ENCODE measurements at regions of chr1 and their contacts with region 1.

Region 1: GRCh38 chr1:169711469-169712281 is at the start of gene SELL:
- DNase-seq: peak; percentile 89
- ATAC-seq: peak; percentile 80
- H3K4me3 Mint-ChIP-seq: peak within 1 kb of the TSS; percentile 81
- H3K27ac Mint-ChIP-seq: peak within 1 kb of the TSS; percentile 90
- H3K4me1 Mint-ChIP-seq: peaks cover 29% of the 10 kb centered on the region
- H3K27me3 Mint-ChIP-seq: peaks cover 10% of the 10 kb centered on the region
- total RNA-seq, gene SELL: 192 to 222 TPM

Region 2: GRCh38 chr1:169546087-169546995 is 165.3 kb before region 1 on chr1:
- CTCF ChIA-PET with region 1: interaction called, 39 read pairs
- POLR2A ChIA-PET with region 1: no interaction called
- DNase-seq: peak; percentile 77
- ATAC-seq: peak; percentile 93
- H3K4me3 Mint-ChIP-seq: no peak overlapping the region
- H3K27ac Mint-ChIP-seq: no peak overlapping the region
- H3K4me1 Mint-ChIP-seq: no peaks in the 10 kb centered on the region
- H3K27me3 Mint-ChIP-seq: no peaks in the 10 kb centered on the region

Region 3: GRCh38 chr1:169576241-169576934 is 135.3 kb before region 1 on chr1:
- CTCF ChIA-PET with region 1: interaction called, 22 read pairs
- POLR2A ChIA-PET with region 1: no interaction called
- DNase-seq: no peak
- ATAC-seq: no peak
- H3K4me3 Mint-ChIP-seq: no peak overlapping the region
- H3K27ac Mint-ChIP-seq: no peak overlapping the region
- H3K4me1 Mint-ChIP-seq: peaks cover 4% of the 10 kb centered on the region
- H3K27me3 Mint-ChIP-seq: no peaks in the 10 kb centered on the region

Region 4: DNA sequence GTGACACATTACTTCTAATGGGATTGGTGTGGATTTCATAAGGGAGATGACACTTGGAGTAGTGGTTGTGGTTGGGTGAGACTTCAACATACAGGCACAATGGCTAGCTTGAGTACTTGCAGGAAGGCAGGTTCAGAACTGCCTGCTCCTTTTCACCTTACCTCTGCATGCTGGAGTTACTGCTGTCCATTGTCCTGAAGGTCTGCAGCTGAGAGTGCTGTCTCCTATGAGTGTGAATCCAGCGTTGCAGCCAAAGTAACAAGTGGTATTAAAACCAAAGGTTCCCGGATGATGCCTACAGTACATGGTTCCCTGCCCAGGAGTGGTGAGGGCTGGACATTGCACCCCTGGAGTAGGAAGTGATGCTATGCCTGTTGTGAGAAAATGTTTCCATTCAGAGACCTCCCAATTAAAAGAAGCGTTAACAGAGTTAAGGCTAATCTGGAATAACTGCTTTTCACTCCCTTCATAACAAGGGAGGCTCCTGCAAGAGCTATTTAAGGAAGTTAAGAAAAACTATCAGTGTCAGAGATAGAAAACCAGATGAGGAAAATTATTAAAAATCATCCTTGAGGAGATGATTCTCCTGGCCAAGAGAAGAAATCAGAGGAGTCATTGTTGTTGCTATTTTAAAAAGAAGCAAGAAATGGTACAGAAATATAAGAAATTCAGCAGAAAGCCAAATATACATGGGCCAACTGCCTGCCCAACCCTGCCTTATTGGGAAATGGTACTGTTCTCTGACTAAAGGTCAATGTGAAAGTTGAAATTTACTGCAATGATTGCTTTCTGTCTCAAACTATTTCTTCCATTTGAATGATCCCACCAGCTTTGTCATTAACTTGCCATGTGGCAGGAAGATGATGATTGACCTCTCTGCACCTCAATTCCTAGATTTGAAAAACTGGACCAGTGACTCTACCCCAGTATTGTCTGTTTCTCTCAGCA is 115.6 kb before region 1 on chr1:
- CTCF ChIA-PET with region 1: interaction called, 215 read pairs
- POLR2A ChIA-PET with region 1: interaction called, 8 read pairs
- DNase-seq: peak; percentile 61
- ATAC-seq: peak; percentile 81
- H3K4me3 Mint-ChIP-seq: no peak overlapping the region
- H3K27ac Mint-ChIP-seq: no peak overlapping the region
- H3K4me1 Mint-ChIP-seq: peaks cover 20% of the 10 kb centered on the region
- H3K27me3 Mint-ChIP-seq: no peaks in the 10 kb centered on the region

Region 5: DNA sequence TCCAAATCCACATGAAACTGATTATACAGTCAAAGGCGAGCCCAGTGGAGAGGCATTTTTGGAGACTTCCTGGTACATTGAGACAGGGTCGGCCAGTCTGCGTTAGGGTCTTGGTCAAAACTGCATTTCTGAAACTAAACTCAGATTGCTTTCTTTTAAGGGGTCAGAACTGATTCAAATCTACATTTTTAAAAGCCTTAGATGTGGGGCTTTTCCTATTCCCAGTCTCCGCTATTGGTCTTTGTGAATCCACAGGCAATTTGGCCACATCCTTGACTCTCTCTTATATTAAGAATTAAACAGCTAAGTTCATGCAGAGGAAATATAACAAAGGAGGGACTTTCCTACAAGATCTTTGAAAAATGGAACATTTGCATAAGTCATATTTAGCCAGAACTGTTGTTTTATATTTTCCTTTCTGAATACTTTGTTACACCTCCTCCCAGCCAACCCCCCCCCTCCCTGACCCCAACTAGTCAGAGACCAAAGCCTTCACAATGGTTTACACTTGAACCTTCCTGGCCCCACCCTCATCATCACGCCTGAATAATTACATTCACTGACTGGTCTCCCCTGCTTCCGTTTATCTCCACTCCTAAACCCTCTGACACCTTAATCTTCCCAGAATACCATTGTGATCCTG is 31.2 kb before region 1 on chr1:
- CTCF ChIA-PET with region 1: interaction called, 12 read pairs
- POLR2A ChIA-PET with region 1: interaction called, 4 read pairs
- DNase-seq: no peak
- ATAC-seq: peak; percentile 45
- H3K4me3 Mint-ChIP-seq: no peak overlapping the region
- H3K27ac Mint-ChIP-seq: peak overlapping the region; percentile 41
- H3K4me1 Mint-ChIP-seq: peaks cover 56% of the 10 kb centered on the region
- H3K27me3 Mint-ChIP-seq: no peaks in the 10 kb centered on the region

Region 6: GRCh38 chr1:169722776-169723175 is 11.1 kb after region 1 on chr1:
- CTCF ChIA-PET with region 1: interaction called, 10 read pairs
- POLR2A ChIA-PET with region 1: no interaction called
- DNase-seq: no peak
- ATAC-seq: no peak
- H3K4me3 Mint-ChIP-seq: no peak overlapping the region
- H3K27ac Mint-ChIP-seq: no peak overlapping the region
- H3K4me1 Mint-ChIP-seq: no peaks in the 10 kb centered on the region
- H3K27me3 Mint-ChIP-seq: peaks cover 16% of the 10 kb centered on the region

Region 7: DNA sequence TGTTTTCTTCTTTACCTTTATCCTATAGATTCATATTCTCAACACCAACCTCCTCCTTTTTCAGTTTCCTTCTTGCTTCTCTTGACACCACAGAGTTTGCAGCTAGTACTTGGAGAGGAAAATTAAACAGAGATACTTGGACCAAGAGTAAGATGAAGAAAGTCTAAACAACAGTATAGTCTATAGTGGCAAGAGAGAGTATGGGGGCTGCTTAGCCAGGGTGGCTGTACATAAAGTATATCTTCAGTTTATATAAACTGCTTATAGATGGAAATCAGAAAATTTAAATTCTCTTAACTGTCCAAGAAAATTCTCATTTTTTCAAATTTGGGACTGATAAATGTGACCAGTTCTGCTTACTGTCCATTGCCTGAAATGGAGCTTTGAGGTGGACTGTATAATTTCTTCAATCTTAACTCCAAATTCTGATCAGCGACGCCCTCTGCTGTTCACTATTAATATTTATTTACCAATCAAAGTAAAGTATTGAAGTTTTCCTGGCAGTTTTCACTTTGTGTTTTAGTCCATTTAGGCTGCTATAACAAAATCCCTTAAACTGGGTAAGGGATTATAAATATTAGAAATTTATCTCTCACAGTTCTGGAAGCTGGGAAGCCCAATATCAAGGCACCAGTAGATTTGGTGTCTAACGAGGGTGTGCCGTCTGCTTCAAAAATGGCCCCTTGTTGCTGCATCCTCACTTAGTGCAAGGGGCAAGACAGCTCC is 97.9 kb after region 1 on chr1:
- CTCF ChIA-PET with region 1: interaction called, 11 read pairs
- POLR2A ChIA-PET with region 1: no interaction called
- DNase-seq: peak; percentile 28
- ATAC-seq: no peak
- H3K4me3 Mint-ChIP-seq: no peak overlapping the region
- H3K27ac Mint-ChIP-seq: no peak overlapping the region
- H3K4me1 Mint-ChIP-seq: peaks cover 8% of the 10 kb centered on the region
- H3K27me3 Mint-ChIP-seq: no peaks in the 10 kb centered on the region

Measured in activated CD8-positive, alpha-beta T cell treated with anti-CD3 and anti-CD28 coated beads, Interleukin-2, amount 10 ng/mL, durations not matched to agents 7 days and 5 days (primary cell).